Heart right ventricle (tissue), 16 donors: ENCODE measurements at regions of chr5 and their contacts with region 1.

Region 1: DNA sequence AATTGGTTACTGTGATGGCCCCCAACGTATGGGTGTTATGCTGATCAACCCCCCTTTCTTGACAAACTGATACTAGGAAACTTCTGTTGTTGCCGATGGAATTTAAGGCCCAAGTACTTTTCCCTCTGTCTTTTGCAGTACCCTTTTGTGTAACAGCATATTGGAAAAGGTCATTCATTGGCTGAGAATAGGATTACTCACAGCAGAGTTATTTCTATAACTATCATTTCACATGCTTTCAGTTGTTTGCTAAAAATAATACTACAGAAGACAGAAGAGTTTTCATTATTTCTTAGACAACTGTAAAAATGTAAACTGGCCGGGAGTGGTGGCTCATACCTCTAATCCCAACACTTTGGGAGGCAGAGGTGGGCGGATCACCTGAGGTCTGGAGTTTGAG is 329.5 kb downstream of the KIAA0825 start:
- DNase-seq: no peak
- ATAC-seq: no peak
- H3K4me3 ChIP-seq: no peak overlapping the region
- H3K27ac ChIP-seq: no peak overlapping the region
- H3K4me1 ChIP-seq: no peaks in the 10 kb centered on the region
- H3K27me3 ChIP-seq: no peaks in the 10 kb centered on the region
- CTCF ChIP-seq: no peak

Region 2: GRCh38 chr5:94192658-94193391 is 96.1 kb before region 1 on chr5:
- intact Hi-C with region 1: loop called in 1 of 10 experiments (anchors 10 kb)
- DNase-seq: no peak
- ATAC-seq: no peak
- H3K4me3 ChIP-seq: no peak overlapping the region
- H3K27ac ChIP-seq: no peak overlapping the region
- H3K4me1 ChIP-seq: no peaks in the 10 kb centered on the region
- H3K27me3 ChIP-seq: no peaks in the 10 kb centered on the region
- CTCF ChIP-seq: no peak